ENCODE measurements at regions of chr16 and their contacts with region 1.

Region 1: GRCh38 chr16:11715246-11715947 is 27.3 kb downstream of the TXNDC11 start:
- DNase-seq: no peak
- H3K4me3 ChIP-seq: no peak overlapping the region
- H3K27ac ChIP-seq: no peak overlapping the region
- H3K4me1 ChIP-seq: peaks cover 0 to 4% of the 10 kb centered on the region in 2 experiments; a peak in 1 of 4 replicates
- H3K27me3 ChIP-seq: no peaks in the 10 kb centered on the region
- CTCF ChIP-seq: no peak
- EP300 ChIP-seq: no peak
- RAD21 ChIP-seq: no peak

Region 2: DNA sequence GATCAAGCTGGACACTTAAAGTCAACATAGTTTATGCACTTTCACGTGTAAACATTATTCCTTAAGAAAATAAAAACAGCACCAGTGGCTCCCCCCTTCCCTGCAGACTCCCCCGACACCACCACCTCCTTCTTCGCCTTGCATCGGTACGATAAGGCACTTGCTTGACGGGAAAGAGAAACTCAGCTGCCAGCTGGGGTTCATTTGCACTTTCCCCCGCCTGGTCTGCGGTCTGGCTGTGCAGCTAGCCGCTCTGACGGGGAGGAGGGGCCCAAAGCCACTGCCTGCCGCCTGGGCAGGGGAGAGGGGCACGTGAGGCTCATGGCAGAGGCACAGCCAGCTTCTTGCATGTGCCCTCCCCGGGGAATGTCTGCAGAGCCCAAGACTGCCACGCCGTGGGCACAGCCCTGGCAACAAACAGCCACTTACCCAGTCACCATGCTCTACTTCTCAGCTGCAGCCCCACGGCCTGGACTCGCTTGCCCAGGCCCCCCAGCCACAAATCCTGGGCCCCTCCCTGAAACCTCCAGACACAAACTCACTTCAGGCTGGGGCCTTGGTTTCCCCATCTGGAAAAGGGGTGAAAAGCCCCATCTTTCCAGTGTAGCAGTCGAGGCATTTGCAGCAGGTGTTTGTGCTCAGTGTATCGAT is 417.8 kb before region 1 on chr16:
- CTCF ChIA-PET with region 1: no interaction called
- POLR2A ChIA-PET with region 1: no interaction called
- DNase-seq: peak; percentile 87
- H3K4me3 ChIP-seq: 0 out of 4 replicates have a peak overlapping the region, but pooled peaks of 1 of the 2 experiments have one; percentile 13
- H3K27ac ChIP-seq: peak overlapping the region in 1 of 2 experiments; percentile 86; a peak in 2 of 4 replicates
- H3K4me1 ChIP-seq: peaks cover 0 to 16% of the 10 kb centered on the region in 2 experiments; a peak in 2 of 4 replicates
- H3K27me3 ChIP-seq: no peaks in the 10 kb centered on the region
- CTCF ChIP-seq: no peak
- EP300 ChIP-seq: peak in 1 of 2 experiments; percentile 45; a peak in 1 of 4 replicates
- RAD21 ChIP-seq: peak; percentile 50

Region 3: DNA sequence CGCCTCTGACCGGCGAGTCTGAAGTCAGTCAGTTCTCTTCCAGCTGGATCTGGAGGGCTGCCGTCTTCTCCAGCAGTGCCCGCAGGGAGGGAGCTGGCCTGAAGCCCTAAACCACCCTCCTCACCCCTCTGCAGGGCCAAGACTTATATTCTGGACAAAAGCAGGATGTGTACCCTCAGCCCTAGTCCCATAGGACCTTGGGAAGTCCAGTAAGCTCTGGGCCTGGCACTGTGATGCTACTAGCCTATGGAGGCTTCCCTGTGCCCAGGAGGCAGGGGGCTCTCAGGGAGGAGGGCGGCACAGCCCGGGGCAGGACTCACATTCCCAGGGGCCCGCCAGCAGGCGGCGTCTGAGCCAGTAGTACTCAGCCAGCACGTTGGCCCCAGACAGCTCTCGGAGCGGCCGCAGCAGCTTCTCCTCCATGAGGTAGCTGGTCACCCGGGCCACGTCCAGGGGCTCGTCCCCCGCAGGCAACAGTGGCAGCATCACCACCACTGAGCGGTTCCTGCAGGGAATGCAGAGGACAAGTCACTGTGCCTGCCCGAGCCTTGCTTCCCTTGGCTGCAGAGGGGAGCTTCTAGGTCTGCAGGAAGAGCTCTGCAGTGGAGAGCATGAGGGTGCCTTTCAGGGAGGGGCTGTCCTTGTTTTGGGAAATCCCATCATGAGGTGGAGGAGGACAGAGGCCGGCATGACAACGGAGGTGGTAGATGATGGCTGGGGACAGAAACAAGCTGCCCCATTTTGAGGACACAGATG is 328.4 kb before region 1 on chr16:
- CTCF ChIA-PET with region 1: interaction called, 11 read pairs
- POLR2A ChIA-PET with region 1: no interaction called
- DNase-seq: no peak
- H3K4me3 ChIP-seq: no peak overlapping the region
- H3K27ac ChIP-seq: no peak overlapping the region
- H3K4me1 ChIP-seq: peaks cover 0 to 20% of the 10 kb centered on the region in 2 experiments; a peak in 1 of 4 replicates
- H3K27me3 ChIP-seq: no peaks in the 10 kb centered on the region
- CTCF ChIP-seq: peak; percentile 32; the same call in 1 of the 2 replicates
- EP300 ChIP-seq: no peak
- RAD21 ChIP-seq: no peak

Region 4: GRCh38 chr16:11535471-11535870 is 179.9 kb before region 1 on chr16:
- CTCF ChIA-PET with region 1: interaction called, 16 read pairs
- POLR2A ChIA-PET with region 1: no interaction called
- DNase-seq: no peak
- H3K4me3 ChIP-seq: no peak overlapping the region
- H3K27ac ChIP-seq: no peak overlapping the region
- H3K4me1 ChIP-seq: no peaks in the 10 kb centered on the region; a peak in 1 of 4 replicates
- H3K27me3 ChIP-seq: no peaks in the 10 kb centered on the region
- CTCF ChIP-seq: no peak
- EP300 ChIP-seq: no peak
- RAD21 ChIP-seq: no peak

Region 5: DNA sequence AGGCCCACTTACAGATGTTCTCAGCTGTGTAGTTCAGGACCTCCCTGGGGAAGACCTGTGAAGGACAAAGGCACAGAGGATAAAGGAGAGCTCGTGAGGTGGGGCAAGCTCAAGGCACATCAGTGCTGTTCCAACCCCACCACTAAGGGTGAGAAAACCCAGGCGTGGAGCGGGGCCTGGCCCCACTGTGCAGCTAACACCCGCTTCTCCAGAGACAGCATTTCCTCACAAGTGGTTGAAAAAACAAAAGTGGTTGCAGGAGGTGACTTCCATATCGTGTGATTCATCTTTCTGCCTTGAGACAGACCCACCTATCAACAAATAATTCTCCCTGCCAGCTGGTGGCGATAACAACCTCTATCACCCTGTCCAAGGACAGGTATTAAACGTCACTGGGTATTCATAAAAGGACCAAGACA is 17.1 kb before region 1 on chr16:
- CTCF ChIA-PET with region 1: interaction called, 12 read pairs
- POLR2A ChIA-PET with region 1: no interaction called
- DNase-seq: no peak
- H3K4me3 ChIP-seq: no peak overlapping the region
- H3K27ac ChIP-seq: no peak overlapping the region
- H3K4me1 ChIP-seq: no peaks in the 10 kb centered on the region; a peak in 1 of 4 replicates
- H3K27me3 ChIP-seq: no peaks in the 10 kb centered on the region
- CTCF ChIP-seq: peak; percentile 28; the same call in 1 of the 2 replicates
- EP300 ChIP-seq: no peak
- RAD21 ChIP-seq: 0 out of 2 replicates have a peak, but pooled peaks have one; percentile 10

Region 6: GRCh38 chr16:11725457-11725856 is 10.1 kb after region 1 on chr16:
- CTCF ChIA-PET with region 1: interaction called, 29 read pairs
- POLR2A ChIA-PET with region 1: no interaction called
- DNase-seq: no peak
- H3K4me3 ChIP-seq: no peak overlapping the region
- H3K27ac ChIP-seq: no peak overlapping the region
- H3K4me1 ChIP-seq: peaks cover 0 to 3% of the 10 kb centered on the region in 2 experiments; a peak in 1 of 4 replicates
- H3K27me3 ChIP-seq: no peaks in the 10 kb centered on the region
- CTCF ChIP-seq: no peak
- EP300 ChIP-seq: no peak
- RAD21 ChIP-seq: no peak

Measured in SK-N-SH (cell line).